OCI-LY7 (cell line): ENCODE measurements at regions of chr10 and their contacts with region 1.

Region 1: DNA sequence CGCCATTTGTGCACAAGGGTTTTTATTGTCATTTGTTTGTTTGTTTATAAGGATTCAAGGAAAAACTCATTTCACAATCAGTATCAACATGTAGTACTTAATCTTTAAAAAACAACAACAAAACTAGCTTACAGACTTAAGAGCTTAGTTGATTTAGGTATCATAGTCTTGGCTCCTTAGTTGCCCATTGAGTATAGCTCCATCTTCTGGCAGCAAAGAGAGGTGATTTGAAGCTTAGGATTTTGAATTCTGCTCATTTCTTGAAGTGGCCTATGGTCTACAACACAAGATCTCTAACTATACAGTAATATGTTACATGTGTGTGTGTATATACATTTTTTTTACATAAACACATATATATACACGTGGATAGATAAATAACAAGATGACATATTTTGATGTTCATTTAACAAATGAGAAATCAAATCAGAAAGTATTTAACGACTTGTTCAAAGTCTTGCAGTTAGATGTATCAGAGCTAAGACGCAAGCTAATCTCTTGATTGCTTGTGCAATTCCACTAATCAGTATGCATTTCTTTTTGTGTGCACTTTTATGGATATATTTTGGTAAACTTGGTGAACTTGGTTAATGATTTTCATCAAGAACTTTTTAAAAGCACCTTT is 307.3 kb downstream of the CAMK1D start:
- DNase-seq: peak; percentile 72
- H3K4me3 ChIP-seq: no peak overlapping the region
- H3K27ac ChIP-seq: no peak overlapping the region
- H3K4me1 ChIP-seq: no peaks in the 10 kb centered on the region
- CTCF ChIP-seq: peak; percentile 94

Region 2: DNA sequence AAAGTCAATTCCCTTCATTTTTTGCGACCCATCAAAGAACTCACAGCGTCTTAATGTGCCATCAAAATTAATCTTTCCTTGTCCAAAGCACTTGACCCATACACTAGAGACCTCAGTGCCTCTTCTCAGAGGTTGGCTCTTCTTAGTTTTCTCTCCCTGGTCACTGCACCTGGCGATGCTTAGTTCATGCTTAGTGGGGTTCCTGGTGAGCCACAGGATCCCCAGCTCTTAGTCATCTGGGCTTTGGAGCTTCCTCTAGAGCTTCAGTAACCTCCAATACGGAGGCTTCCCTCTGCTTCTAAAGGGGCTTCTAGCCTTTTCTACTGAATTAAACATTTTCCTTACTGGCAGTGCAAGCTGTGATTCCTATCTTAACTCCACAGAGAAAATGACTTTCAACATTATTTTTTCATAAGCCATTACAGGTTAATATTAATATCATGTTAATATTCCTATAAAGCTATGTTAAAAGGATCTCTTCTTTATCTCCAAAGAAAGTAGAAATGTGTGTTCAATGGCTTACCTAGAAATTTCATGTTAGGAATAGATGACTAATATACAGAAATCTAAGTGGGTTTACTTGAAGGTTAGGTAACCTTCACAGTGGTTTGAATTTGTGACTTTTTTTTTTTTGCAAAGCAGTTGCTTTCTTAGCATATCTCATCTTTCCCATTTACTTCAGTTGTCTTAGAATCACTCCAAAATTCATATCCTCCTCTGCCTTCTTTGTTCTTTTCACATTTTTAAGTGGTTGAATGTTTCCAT is 12.1 kb before region 1 on chr10:
- CTCF ChIA-PET with region 1: interaction called, 3 read pairs
- POLR2A ChIA-PET with region 1: interaction called, 10 read pairs
- intact Hi-C with region 1: no loop called
- DNase-seq: no peak
- H3K4me3 ChIP-seq: no peak overlapping the region
- H3K27ac ChIP-seq: no peak overlapping the region
- H3K4me1 ChIP-seq: no peaks in the 10 kb centered on the region
- CTCF ChIP-seq: no peak

Region 3: DNA sequence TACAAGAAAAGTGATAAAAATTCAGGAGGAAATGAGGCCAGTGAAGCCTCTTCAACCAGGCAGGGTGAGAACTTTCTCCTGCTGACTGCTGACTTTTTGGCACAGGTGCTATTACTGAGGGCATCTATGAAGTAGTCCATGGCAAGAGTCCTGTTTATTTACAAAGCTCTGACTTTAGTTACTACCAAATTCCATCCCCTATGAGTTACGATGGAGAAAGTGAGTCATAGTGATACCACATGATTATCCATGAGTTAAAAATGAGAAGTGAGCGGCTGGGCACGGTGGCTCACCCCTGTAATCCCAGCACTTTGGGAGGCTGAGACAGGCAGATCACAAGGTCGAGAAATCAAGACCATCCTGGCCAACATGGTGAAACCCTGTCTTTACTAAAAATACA is 324.9 kb after region 1 on chr10:
- CTCF ChIA-PET with region 1: no interaction called
- POLR2A ChIA-PET with region 1: no interaction called
- intact Hi-C with region 1: no loop called
- DNase-seq: no peak
- H3K4me3 ChIP-seq: no peak overlapping the region
- H3K27ac ChIP-seq: no peak overlapping the region
- H3K4me1 ChIP-seq: no peaks in the 10 kb centered on the region
- CTCF ChIP-seq: no peak